ENCODE measurements at regions of chr1 and their contacts with region 1.

Region 1: DNA sequence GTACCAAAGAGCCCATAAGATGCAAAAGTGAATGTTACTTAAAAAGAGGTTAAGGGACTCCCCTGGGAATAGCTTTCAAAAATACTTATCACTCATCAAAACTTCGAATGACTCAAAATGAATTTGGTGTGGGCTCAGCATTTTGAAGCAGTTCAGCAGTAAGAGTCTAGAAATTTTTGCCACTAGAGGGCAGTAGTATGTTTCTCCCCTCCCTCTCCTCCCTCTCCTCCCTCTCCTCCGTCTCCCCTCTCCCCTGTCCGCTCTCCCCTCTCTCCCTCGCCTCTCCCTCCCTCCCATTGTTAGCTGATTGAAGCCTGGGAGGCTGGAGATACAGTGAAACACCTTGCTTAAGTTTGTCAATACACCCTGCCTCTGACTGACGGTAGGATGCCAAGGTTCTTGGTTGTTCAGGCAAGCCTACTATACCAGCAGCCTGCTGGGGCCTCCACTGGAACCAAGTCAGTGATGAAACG is 70.8 kb upstream of the TENT5C start:
- DNase-seq: peak in 2 of 5 donors; percentile 22 to 33
- ATAC-seq: peak; percentile 70 to 91 (median 88)
- H3K4me3 ChIP-seq: no peak overlapping the region
- H3K27ac ChIP-seq: no peak overlapping the region
- H3K4me1 ChIP-seq: no peaks in the 10 kb centered on the region
- H3K27me3 ChIP-seq: no peaks in the 10 kb centered on the region
- CTCF ChIP-seq: peak; percentile 49 to 74 (median 64)
- POLR2A ChIP-seq: no peak

Region 2: GRCh38 chr1:117753654-117754054 is 218.6 kb after region 1 on chr1:
- intact Hi-C with region 1: loop called (anchors 1 to 5 kb)
- DNase-seq: no peak
- ATAC-seq: peak in 1 of 4 donors; percentile 29
- H3K4me3 ChIP-seq: peak overlapping the region in 4 of 12 donors; percentile 26 to 41 (median 38)
- H3K27ac ChIP-seq: no peak overlapping the region
- H3K4me1 ChIP-seq: peaks cover 0 to 21% (median 3%) of the 10 kb centered on the region in 12 donors
- H3K27me3 ChIP-seq: peaks cover 0 to 4% (median 0%) of the 10 kb centered on the region in 9 donors
- CTCF ChIP-seq: no peak
- POLR2A ChIP-seq: no peak